Heart left ventricle (tissue), 16 donors: ENCODE measurements at regions of chr11 and their contacts with region 1.

Region 1: GRCh38 chr11:79822766-79823165 is 381.9 kb upstream of the TENM4 start:
- DNase-seq: no peak
- ATAC-seq: no peak
- H3K4me3 ChIP-seq: no peak overlapping the region
- H3K27ac ChIP-seq: no peak overlapping the region
- H3K4me1 ChIP-seq: no peaks in the 10 kb centered on the region
- H3K27me3 ChIP-seq: no peaks in the 10 kb centered on the region
- CTCF ChIP-seq: no peak
- POLR2A ChIP-seq: no peak

Region 2: GRCh38 chr11:78548911-78549590 is 1273.7 kb before region 1 on chr11:
- intact Hi-C with region 1: no loop called
- DNase-seq: no peak
- ATAC-seq: peak in 2 of 4 donors; percentile 16 to 27
- H3K4me3 ChIP-seq: no peak overlapping the region
- H3K27ac ChIP-seq: peak overlapping the region in 1 of 12 donors; percentile 19
- H3K4me1 ChIP-seq: peaks cover 0 to 13% (median under 1%) of the 10 kb centered on the region in 12 donors
- H3K27me3 ChIP-seq: no peaks in the 10 kb centered on the region
- CTCF ChIP-seq: no peak
- POLR2A ChIP-seq: no peak

Region 3: DNA sequence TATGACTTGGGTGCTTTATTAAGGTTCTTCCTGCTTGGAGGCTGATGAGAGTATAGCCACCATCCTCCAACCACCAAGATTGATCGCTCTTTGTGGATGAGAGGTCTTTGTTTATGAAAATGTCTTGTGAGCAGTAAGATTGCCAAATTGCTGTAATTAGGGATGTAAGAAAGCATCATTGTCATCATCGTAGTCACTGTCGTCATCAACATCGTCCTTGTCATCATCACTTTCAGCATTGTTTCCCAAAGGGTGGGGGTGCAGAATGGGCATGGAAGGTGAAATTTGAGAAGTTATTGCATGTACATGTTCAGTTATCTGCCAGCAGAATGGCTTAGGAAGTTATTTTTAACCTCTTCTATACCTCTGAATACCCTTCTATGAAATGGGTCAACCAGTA is 57.5 kb after region 1 on chr11:
- intact Hi-C with region 1: loop called in 1 of 10 experiments (anchors 10 kb)
- DNase-seq: no peak
- ATAC-seq: no peak
- H3K4me3 ChIP-seq: no peak overlapping the region
- H3K27ac ChIP-seq: no peak overlapping the region
- H3K4me1 ChIP-seq: no peaks in the 10 kb centered on the region
- H3K27me3 ChIP-seq: no peaks in the 10 kb centered on the region
- CTCF ChIP-seq: no peak
- POLR2A ChIP-seq: no peak